ENCODE measurements at regions of chr2 and their contacts with region 1.

Region 1: GRCh38 chr2:159712143-159712928 is at the start of gene MARCHF7:
- DNase-seq: peak; percentile 96 to 99 (median 98)
- ATAC-seq: peak; percentile 98 to 99
- H3K4me3 ChIP-seq: peak within 1 kb of the TSS; percentile 89
- H3K27ac ChIP-seq: peak within 1 kb of the TSS; percentile 99
- H3K4me1 ChIP-seq: peaks cover 9% of the 10 kb centered on the region
- H3K27me3 ChIP-seq: no peaks in the 10 kb centered on the region
- total RNA-seq, gene MARCHF7: 70.0 to 85.4 (median 74.9) TPM

Region 2: DNA sequence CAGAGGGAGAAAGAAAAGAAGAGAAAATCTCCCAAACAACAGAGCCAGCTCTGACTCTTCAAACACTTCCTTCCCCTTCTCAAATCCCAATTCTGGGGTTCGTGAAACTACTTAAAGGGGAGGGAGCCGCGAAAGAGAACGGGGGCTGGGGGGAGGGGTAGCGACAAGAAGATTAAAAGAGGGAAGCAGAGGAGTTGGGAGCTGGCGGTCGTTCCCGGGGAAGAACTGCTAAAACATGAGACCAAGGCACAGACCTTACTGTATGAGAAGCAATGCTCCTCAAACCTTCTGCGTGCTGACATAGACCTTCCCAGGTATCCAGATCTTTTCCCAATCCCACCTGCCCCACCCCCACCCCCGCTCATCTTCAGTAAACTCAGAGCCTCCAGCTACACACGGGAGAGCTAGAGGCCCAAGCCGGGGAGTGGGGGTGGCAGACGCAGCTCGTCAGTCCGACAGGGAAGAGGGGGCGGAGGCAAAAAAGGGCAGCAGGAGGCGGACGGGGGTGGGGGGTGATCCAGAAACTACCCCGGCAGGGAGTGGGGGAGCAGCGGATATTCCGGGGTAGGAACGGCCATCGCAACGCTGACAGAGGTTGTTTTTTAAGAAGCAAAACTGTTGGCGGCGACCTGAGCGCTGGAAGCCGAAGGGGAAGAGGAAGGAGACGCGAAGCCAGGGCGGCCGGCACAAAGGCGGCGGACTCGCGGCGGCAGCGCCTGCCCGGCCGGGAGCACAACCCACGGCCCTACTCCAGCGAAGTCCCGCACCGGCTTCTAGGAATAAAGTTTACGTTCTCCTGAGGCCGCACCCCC is 97.0 kb before region 1 on chr2:
- intact Hi-C with region 1: loop called in 2 of 4 experiments (anchors 5 to 10 kb)
- DNase-seq: peak; percentile 93 to 96 (median 95)
- ATAC-seq: peak; percentile 97 to 98
- H3K4me3 ChIP-seq: peak overlapping the region; percentile 83
- H3K27ac ChIP-seq: peak overlapping the region; percentile 99
- H3K4me1 ChIP-seq: no peaks in the 10 kb centered on the region
- H3K27me3 ChIP-seq: no peaks in the 10 kb centered on the region